Activated T-helper 2 cell treated with anti-CD3 and anti-CD28 coated beads, Interferon-gamma antibody, Interleukin-2, Interleukin-4, amounts not matched to agents 10 μg/mL and 5 μg/mL and 100 μg/mL, durations not matched to agents 14 hours and 24 hours and 36 hours (primary cell): ENCODE measurements at regions of chr3 and their contacts with region 1.

Region 1: GRCh38 chr3:15291589-15292541 is 40.5 kb downstream of the SH3BP5 start:
- DNase-seq: peak; percentile 69
- H3K4me3 Mint-ChIP-seq: peak overlapping the region; percentile 31
- H3K27ac Mint-ChIP-seq: peak overlapping the region; percentile 74
- H3K4me1 Mint-ChIP-seq: peaks cover 50% of the 10 kb centered on the region
- H3K27me3 Mint-ChIP-seq: no peaks in the 10 kb centered on the region

Region 2: GRCh38 chr3:15303728-15304127 is 11.9 kb after region 1 on chr3:
- intact Hi-C with region 1: no loop called
- DNase-seq: no peak
- H3K4me3 Mint-ChIP-seq: no peak overlapping the region
- H3K27ac Mint-ChIP-seq: no peak overlapping the region
- H3K4me1 Mint-ChIP-seq: peaks cover 34% of the 10 kb centered on the region
- H3K27me3 Mint-ChIP-seq: no peaks in the 10 kb centered on the region

Region 3: GRCh38 chr3:15332405-15333098 is 40.7 kb after region 1 on chr3 and contains the start of gene SH3BP5:
- intact Hi-C with region 1: loop called (anchors 5 kb)
- DNase-seq: peak; percentile 68
- H3K4me3 Mint-ChIP-seq: peak within 1 kb of the TSS; percentile 90
- H3K27ac Mint-ChIP-seq: peak within 1 kb of the TSS; percentile 77
- H3K4me1 Mint-ChIP-seq: peaks cover 45% of the 10 kb centered on the region
- H3K27me3 Mint-ChIP-seq: peaks cover 2% of the 10 kb centered on the region
- total RNA-seq, gene SH3BP5: 14.8 and 15.0 TPM in 2 replicates

Region 4: GRCh38 chr3:15361494-15362212 is 69.8 kb after region 1 on chr3:
- intact Hi-C with region 1: loop called (anchors 1 kb)
- DNase-seq: peak; percentile 36
- H3K4me3 Mint-ChIP-seq: peak overlapping the region; percentile 30
- H3K27ac Mint-ChIP-seq: peak overlapping the region; percentile 81
- H3K4me1 Mint-ChIP-seq: peaks cover 36% of the 10 kb centered on the region
- H3K27me3 Mint-ChIP-seq: no peaks in the 10 kb centered on the region

Region 5: DNA sequence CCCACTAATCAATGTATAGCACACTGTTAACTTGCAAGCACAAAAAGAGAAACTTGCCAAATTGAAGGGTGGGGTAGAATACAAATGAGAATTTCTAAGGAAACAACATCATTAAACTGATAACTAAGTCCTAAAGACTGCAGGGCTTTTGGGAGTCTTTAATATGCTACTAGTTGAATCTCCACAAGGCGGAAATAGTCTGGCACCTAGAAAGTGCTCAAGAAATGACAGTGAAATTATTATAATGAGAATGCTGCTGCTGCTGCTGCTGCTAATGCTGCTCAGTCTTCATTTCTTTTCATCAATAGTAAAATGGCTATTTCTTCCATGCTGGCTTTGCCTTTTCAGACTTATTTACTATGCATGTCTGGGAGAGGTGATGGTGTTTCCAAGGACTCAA is 401.5 kb after region 1 on chr3:
- intact Hi-C with region 1: no loop called
- DNase-seq: no peak
- H3K4me3 Mint-ChIP-seq: no peak overlapping the region
- H3K27ac Mint-ChIP-seq: no peak overlapping the region
- H3K4me1 Mint-ChIP-seq: peaks cover 19% of the 10 kb centered on the region
- H3K27me3 Mint-ChIP-seq: no peaks in the 10 kb centered on the region